Uterus (tissue), 4 donors: ENCODE measurements at regions of chr5 and their contacts with region 1.

Region 1: DNA sequence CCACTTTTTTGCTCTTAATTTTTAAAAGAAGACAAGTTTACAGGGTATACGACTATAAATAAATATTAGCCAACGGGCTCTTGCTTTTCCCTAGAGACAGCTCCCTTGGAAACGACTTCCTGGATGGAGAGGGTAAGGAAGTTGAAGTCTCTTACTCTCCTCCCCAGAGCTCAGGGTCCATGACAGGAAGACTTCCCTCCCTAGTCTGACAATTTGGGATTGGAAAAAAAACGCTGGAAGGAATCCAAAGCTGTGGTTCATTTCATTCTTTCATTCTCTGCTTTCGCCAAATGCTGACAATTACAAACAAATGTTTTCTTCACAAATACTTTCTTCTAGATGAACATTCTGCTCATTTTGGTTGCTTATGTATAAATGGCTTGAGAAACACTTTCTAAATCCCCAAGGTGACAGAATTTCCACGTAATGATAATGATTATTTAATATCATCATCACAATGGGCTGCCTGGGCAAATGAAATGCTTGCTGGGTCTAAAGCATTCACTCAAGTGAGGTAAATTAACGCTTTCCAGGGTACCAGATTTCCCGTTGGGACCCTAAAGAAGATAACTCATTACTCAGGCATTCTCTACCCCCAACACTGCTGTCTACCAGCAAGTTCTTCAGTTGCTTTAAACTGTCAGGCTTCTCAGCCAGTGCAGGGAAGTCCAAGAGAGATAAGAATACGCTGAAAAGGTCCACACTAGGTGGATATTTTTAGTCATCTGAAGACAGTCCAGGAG is 139.8 kb upstream of the SLC30A5 start:
- DNase-seq: peak; percentile 54 to 75
- H3K4me3 ChIP-seq: no peak overlapping the region
- H3K27ac ChIP-seq: peak overlapping the region; percentile 73 to 77
- H3K4me1 ChIP-seq: no peaks in the 10 kb centered on the region
- H3K27me3 ChIP-seq: no peaks in the 10 kb centered on the region
- CTCF ChIP-seq: no peak
- POLR2A ChIP-seq: no peak

Region 2: DNA sequence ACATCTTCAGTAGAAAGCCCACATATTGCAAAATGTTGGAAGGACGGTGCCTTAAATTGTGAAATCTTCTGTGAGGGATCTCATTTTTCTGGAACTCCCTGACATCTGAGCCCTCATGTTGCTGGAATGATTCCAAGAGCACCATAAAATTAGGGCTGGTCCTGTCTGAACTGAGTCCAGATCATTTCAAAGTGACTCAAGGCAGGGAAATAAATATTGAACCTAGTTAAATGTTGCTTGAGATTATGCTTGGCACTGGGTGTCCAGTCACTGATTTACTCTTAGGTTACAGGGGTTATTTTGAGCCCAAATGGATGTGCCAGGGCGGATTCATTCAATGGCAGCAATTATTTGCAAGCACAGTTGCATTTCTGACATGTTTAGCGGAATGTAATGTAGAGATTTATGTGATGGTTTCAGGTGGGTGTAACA is 301.5 kb before region 1 on chr5:
- intact Hi-C with region 1: loop called (anchors 10 kb)
- DNase-seq: peak; percentile 52 to 77
- H3K4me3 ChIP-seq: no peak overlapping the region
- H3K27ac ChIP-seq: peak overlapping the region; percentile 82 to 87
- H3K4me1 ChIP-seq: no peaks in the 10 kb centered on the region
- H3K27me3 ChIP-seq: no peaks in the 10 kb centered on the region
- CTCF ChIP-seq: no peak
- POLR2A ChIP-seq: no peak

Region 3: GRCh38 chr5:68884883-68885282 is 69.2 kb before region 1 on chr5:
- intact Hi-C with region 1: no loop called
- DNase-seq: no peak
- H3K4me3 ChIP-seq: no peak overlapping the region
- H3K27ac ChIP-seq: peak overlapping the region in 1 of 2 donors; percentile 12
- H3K4me1 ChIP-seq: no peaks in the 10 kb centered on the region
- H3K27me3 ChIP-seq: no peaks in the 10 kb centered on the region
- CTCF ChIP-seq: peak in 1 of 4 experiments; percentile 28
- POLR2A ChIP-seq: no peak